HEK293T (cell line): ENCODE measurements at regions of chr12 and their contacts with region 1.

Region 1: GRCh38 chr12:110280779-110281548 is at the start of gene ATP2A2:
- DNase-seq: peak; percentile 92

Region 2: GRCh38 chr12:110270125-110270962 is 10.6 kb before region 1 on chr12:
- CTCF ChIA-PET with region 1: no interaction called
- POLR2A ChIA-PET with region 1: interaction called, 21 read pairs
- DNase-seq: peak; percentile 45